B cell (primary cell): ENCODE measurements at regions of chr2 and their contacts with region 1.

Region 1: GRCh38 chr2:219388127-219388844 is 574 bp upstream of the DNPEP start:
- DNase-seq: peak; percentile 99
- ATAC-seq: peak; percentile 77
- H3K4me3 ChIP-seq: peak overlapping the region in 4 of 5 experiments; percentile 23 to 50 (median 45)
- H3K4me3 Mint-ChIP-seq: peak overlapping the region; percentile 95
- H3K27ac ChIP-seq: peak overlapping the region; percentile 62 to 85
- H3K27ac Mint-ChIP-seq: peak overlapping the region; percentile 93
- H3K4me1 ChIP-seq: peaks cover 15 to 18% of the 10 kb centered on the region in 2 donors
- H3K4me1 Mint-ChIP-seq: peaks cover 13% of the 10 kb centered on the region
- H3K27me3 ChIP-seq: peaks cover 0 to 3% (median 0%) of the 10 kb centered on the region in 4 experiments
- H3K27me3 Mint-ChIP-seq: peaks cover 5% of the 10 kb centered on the region
- CTCF ChIP-seq: peak; percentile 70

Region 2: DNA sequence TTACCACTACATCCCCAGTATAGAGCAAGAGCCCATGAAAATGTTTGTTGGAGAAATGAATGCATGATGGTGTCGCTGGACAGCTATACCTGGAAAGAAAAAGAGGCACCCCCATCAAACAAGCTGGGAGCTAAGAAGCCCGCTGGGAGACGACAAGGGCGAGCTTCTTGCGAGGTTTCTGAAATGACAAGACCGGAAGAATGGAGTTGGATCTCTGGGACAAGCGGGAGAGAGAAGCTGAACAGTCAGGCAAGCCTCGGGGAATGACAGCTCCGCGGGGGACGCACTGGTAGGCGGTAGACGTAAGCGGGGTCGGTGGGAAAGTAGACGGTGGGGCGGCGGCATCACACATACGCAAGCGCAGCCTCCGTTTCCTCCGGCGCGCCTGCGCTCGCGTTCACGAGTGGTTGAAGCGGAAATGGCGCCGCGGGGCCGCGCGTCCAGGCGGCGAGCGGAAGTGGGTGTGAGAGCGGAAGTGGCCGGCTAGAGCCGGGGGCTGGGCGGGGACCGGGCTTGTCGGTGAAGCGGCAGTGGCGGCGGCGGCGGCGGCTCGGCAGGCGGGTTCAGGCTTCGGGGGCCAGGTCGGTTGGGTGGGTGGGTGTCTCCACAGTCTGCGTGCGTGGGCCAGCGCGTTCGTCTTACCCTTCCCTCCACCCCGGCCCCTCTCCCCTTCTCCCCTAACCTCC is 1171.5 kb before region 1 on chr2 and contains the start of gene ARPC2:
- CTCF ChIA-PET with region 1: no interaction called
- POLR2A ChIA-PET with region 1: no interaction called
- intact Hi-C with region 1: loop called (anchors 5 kb)
- DNase-seq: peak; percentile 98
- ATAC-seq: peak; percentile 74
- H3K4me3 ChIP-seq: peak within 1 kb of the TSS; percentile 93 to 99 (median 97)
- H3K4me3 Mint-ChIP-seq: peak within 1 kb of the TSS; percentile 90
- H3K27ac ChIP-seq: peak within 1 kb of the TSS; percentile 95 to 99
- H3K27ac Mint-ChIP-seq: peak within 1 kb of the TSS; percentile 94
- H3K4me1 ChIP-seq: peaks cover 36 to 45% of the 10 kb centered on the region in 2 donors
- H3K4me1 Mint-ChIP-seq: peaks cover 43% of the 10 kb centered on the region
- H3K27me3 ChIP-seq: no peaks in the 10 kb centered on the region
- H3K27me3 Mint-ChIP-seq: no peaks in the 10 kb centered on the region
- CTCF ChIP-seq: no peak
- total RNA-seq, gene ARPC2: 343 and 352 TPM in 2 replicates

Region 3: GRCh38 chr2:218659258-218659987 is 728.9 kb before region 1 on chr2 and contains the starts of genes BCS1L and ZNF142:
- CTCF ChIA-PET with region 1: interaction called, 4 read pairs
- POLR2A ChIA-PET with region 1: interaction called, 3 read pairs
- intact Hi-C with region 1: loop called (anchors 1 kb)
- DNase-seq: peak; percentile 91
- ATAC-seq: peak; percentile 97
- H3K4me3 ChIP-seq: peak within 1 kb of the TSS; percentile 65 to 93 (median 81)
- H3K4me3 Mint-ChIP-seq: peak within 1 kb of the TSS; percentile 99
- H3K27ac ChIP-seq: peak within 1 kb of the TSS; percentile 46 to 77
- H3K27ac Mint-ChIP-seq: peak within 1 kb of the TSS; percentile 95
- H3K4me1 ChIP-seq: peaks cover 12 to 16% of the 10 kb centered on the region in 2 donors
- H3K4me1 Mint-ChIP-seq: peaks cover 28% of the 10 kb centered on the region
- H3K27me3 ChIP-seq: no peaks in the 10 kb centered on the region
- H3K27me3 Mint-ChIP-seq: no peaks in the 10 kb centered on the region
- CTCF ChIP-seq: no peak
- total RNA-seq, gene BCS1L: 56.1 and 60.1 TPM in 2 replicates
- total RNA-seq, gene ZNF142: 51.1 and 56.1 TPM in 2 replicates

Region 4: GRCh38 chr2:219177552-219178376 is 210.5 kb before region 1 on chr2 and contains the start of gene RETREG2:
- CTCF ChIA-PET with region 1: no interaction called
- POLR2A ChIA-PET with region 1: interaction called, 12 read pairs
- intact Hi-C with region 1: loop called (anchors 1 kb)
- DNase-seq: peak; percentile 97
- ATAC-seq: peak; percentile 44
- H3K4me3 ChIP-seq: peak within 1 kb of the TSS; percentile 87 to 97 (median 95)
- H3K4me3 Mint-ChIP-seq: peak within 1 kb of the TSS; percentile 99
- H3K27ac ChIP-seq: peak within 1 kb of the TSS; percentile 94 to 97
- H3K27ac Mint-ChIP-seq: peak within 1 kb of the TSS; percentile 99
- H3K4me1 ChIP-seq: peaks cover 17 to 48% of the 10 kb centered on the region in 2 donors
- H3K4me1 Mint-ChIP-seq: peaks cover 46% of the 10 kb centered on the region
- H3K27me3 ChIP-seq: no peaks in the 10 kb centered on the region
- H3K27me3 Mint-ChIP-seq: no peaks in the 10 kb centered on the region
- CTCF ChIP-seq: peak; percentile 55
- total RNA-seq, gene RETREG2: 86.3 and 102 TPM in 2 replicates

Region 5: GRCh38 chr2:219278655-219279516 is 109.4 kb before region 1 on chr2 and contains the start of gene DNAJB2:
- CTCF ChIA-PET with region 1: interaction called, 4 read pairs
- POLR2A ChIA-PET with region 1: interaction called, 4 read pairs
- intact Hi-C with region 1: loop called (anchors 1 kb)
- DNase-seq: peak; percentile 99
- ATAC-seq: peak; percentile 76
- H3K4me3 ChIP-seq: peak within 1 kb of the TSS; percentile 49 to 80 (median 77)
- H3K4me3 Mint-ChIP-seq: peak within 1 kb of the TSS; percentile 92
- H3K27ac ChIP-seq: peak within 1 kb of the TSS; percentile 98 to 100
- H3K27ac Mint-ChIP-seq: peak within 1 kb of the TSS; percentile 96
- H3K4me1 ChIP-seq: peaks cover 32 to 48% of the 10 kb centered on the region in 2 donors
- H3K4me1 Mint-ChIP-seq: peaks cover 48% of the 10 kb centered on the region
- H3K27me3 ChIP-seq: no peaks in the 10 kb centered on the region
- H3K27me3 Mint-ChIP-seq: no peaks in the 10 kb centered on the region
- CTCF ChIP-seq: no peak
- total RNA-seq, gene DNAJB2: 169 and 184 TPM in 2 replicates

Region 6: GRCh38 chr2:219308142-219309093 is 79.9 kb before region 1 on chr2:
- CTCF ChIA-PET with region 1: no interaction called
- POLR2A ChIA-PET with region 1: no interaction called
- intact Hi-C with region 1: no loop called
- DNase-seq: peak; percentile 68
- ATAC-seq: peak; percentile 68
- H3K4me3 ChIP-seq: no peak overlapping the region
- H3K4me3 Mint-ChIP-seq: no peak overlapping the region
- H3K27ac ChIP-seq: no peak overlapping the region
- H3K27ac Mint-ChIP-seq: no peak overlapping the region
- H3K4me1 ChIP-seq: peaks cover 0 to 6% of the 10 kb centered on the region in 2 donors
- H3K4me1 Mint-ChIP-seq: peaks cover 2% of the 10 kb centered on the region
- H3K27me3 ChIP-seq: peaks cover 0 to 37% (median 29%) of the 10 kb centered on the region in 4 experiments
- H3K27me3 Mint-ChIP-seq: peaks cover 62% of the 10 kb centered on the region
- CTCF ChIP-seq: no peak

Region 7: DNA sequence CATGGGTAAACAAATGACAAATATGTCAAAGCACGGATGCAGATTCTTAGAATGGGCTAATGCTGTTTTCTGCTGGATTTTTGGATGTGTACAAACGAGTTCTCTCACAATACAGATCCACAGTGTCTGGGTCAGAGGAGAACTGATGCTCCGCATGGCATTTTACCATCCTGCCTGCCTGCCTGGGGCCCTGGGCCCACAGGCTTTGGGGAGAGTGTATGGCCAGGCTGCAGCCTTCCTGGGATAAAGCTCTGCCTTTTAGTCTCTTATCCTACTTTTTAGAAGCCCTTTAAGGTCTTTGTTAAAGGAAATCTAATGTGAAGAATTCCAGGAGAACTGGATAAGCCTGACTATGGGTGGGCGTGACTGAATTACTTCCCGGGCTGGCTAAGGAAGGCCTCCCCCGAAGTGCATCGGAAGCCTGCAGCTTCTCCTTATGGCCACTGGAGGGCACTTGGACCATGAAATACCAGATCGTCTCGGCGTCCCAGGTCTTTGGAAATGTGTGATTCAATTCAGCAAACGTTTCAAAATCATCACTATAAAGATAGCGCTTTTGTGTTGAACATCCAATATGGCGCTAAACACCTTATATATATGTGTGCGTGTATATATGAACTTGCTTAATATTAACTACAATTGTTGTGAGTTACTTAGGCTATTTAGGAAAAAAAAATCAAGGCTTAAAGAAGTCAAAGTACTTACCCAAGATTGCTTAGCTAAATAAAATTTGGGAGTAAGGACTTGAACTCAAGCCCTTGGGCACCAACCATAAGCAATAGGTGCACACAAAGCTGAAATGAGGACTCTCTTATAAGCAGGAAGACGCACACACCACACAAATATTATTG is 14.6 kb after region 1 on chr2:
- CTCF ChIA-PET with region 1: interaction called, 32 read pairs
- POLR2A ChIA-PET with region 1: no interaction called
- intact Hi-C with region 1: no loop called
- DNase-seq: peak; percentile 71
- ATAC-seq: peak; percentile 84
- H3K4me3 ChIP-seq: no peak overlapping the region
- H3K4me3 Mint-ChIP-seq: no peak overlapping the region
- H3K27ac ChIP-seq: no peak overlapping the region
- H3K27ac Mint-ChIP-seq: no peak overlapping the region
- H3K4me1 ChIP-seq: no peaks in the 10 kb centered on the region
- H3K4me1 Mint-ChIP-seq: no peaks in the 10 kb centered on the region
- H3K27me3 ChIP-seq: peaks cover 0 to 25% (median 0%) of the 10 kb centered on the region in 4 experiments
- H3K27me3 Mint-ChIP-seq: peaks cover 28% of the 10 kb centered on the region
- CTCF ChIP-seq: peak; percentile 93

Region 8: DNA sequence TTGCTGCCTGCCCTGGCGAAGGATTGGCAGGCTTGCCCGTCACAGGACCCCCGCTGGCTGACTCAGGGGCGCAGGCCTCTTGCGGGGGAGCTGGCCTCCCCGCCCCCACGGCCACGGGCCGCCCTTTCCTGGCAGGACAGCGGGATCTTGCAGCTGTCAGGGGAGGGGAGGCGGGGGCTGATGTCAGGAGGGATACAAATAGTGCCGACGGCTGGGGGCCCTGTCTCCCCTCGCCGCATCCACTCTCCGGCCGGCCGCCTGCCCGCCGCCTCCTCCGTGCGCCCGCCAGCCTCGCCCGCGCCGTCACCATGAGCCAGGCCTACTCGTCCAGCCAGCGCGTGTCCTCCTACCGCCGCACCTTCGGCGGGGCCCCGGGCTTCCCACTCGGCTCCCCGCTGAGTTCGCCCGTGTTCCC is 29.9 kb after region 1 on chr2 and contains the start of gene DES:
- CTCF ChIA-PET with region 1: no interaction called
- POLR2A ChIA-PET with region 1: no interaction called
- intact Hi-C with region 1: no loop called
- DNase-seq: no peak
- ATAC-seq: no peak
- H3K4me3 ChIP-seq: no peak within 1 kb of the TSS
- H3K4me3 Mint-ChIP-seq: no peak within 1 kb of the TSS
- H3K27ac ChIP-seq: no peak within 1 kb of the TSS
- H3K27ac Mint-ChIP-seq: no peak within 1 kb of the TSS
- H3K4me1 ChIP-seq: no peaks in the 10 kb centered on the region
- H3K4me1 Mint-ChIP-seq: peaks cover 1% of the 10 kb centered on the region
- H3K27me3 ChIP-seq: peaks cover 0 to 41% (median 5%) of the 10 kb centered on the region in 4 experiments
- H3K27me3 Mint-ChIP-seq: peaks cover 46% of the 10 kb centered on the region
- CTCF ChIP-seq: no peak
- total RNA-seq, gene DES: not detected in 2 replicates

Region 9: DNA sequence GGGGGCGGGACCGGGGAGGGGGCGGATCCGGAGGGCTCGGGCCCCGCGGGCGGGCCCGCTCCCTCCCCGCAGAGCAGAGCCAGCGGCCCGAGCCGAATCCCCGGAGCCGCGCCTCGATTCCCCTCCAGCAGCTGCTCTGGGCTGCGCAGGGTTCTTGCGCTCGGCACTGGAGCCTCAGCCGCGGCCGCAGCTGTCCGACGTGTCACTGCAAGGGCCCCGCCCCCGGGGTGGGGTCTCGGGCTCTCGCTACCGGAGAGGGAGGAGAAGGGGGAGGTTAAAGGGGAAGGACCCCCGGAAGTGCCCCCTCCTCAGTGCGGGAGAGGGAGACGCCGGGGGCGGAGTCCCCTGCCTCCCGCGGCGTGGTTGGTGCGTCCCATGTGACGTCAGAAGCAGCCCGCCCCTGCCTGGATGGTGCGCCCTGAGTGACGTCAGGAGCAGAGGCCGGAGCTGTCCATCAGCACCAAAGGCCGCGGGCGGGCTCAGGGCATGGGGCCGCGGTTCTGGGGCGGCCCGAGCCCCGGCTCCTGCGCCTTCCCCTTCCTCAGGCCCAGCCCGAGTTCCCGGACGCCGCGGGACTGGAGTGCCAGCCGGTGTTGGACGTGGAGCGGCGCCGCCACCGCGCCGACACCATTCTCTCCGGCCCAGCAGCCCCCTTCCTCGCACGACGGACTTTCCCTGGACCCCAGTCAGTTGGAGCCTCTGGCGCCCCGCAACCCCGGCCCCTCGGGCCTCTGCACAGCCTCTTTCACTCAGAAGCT is 155.5 kb after region 1 on chr2 and contains the starts of genes CHPF and TMEM198:
- CTCF ChIA-PET with region 1: interaction called, 3 read pairs
- POLR2A ChIA-PET with region 1: no interaction called
- intact Hi-C with region 1: loop called (anchors 1 kb)
- DNase-seq: peak; percentile 93
- ATAC-seq: peak; percentile 80
- H3K4me3 ChIP-seq: peak within 1 kb of the TSS in 4 of 5 experiments; percentile 63 to 78 (median 67)
- H3K4me3 Mint-ChIP-seq: peak within 1 kb of the TSS; percentile 83
- H3K27ac ChIP-seq: peak within 1 kb of the TSS in 1 of 2 donors; percentile 35
- H3K27ac Mint-ChIP-seq: peak within 1 kb of the TSS; percentile 50
- H3K4me1 ChIP-seq: peaks cover 29 to 31% of the 10 kb centered on the region in 2 donors
- H3K4me1 Mint-ChIP-seq: peaks cover 24% of the 10 kb centered on the region
- H3K27me3 ChIP-seq: peaks cover 0 to 82% (median 21%) of the 10 kb centered on the region in 4 experiments
- H3K27me3 Mint-ChIP-seq: peaks cover 40% of the 10 kb centered on the region
- CTCF ChIP-seq: no peak
- total RNA-seq, gene CHPF: 1.2 and 1.3 TPM in 2 replicates
- total RNA-seq, gene TMEM198: 0.39 TPM in 1 of 2 replicates, not detected in the other